Mammary epithelial cell (primary cell): ENCODE measurements at regions of chr20 and their contacts with region 1.

Region 1: GRCh38 chr20:31496761-31497295 is 17.4 kb upstream of the HM13 start:
- DNase-seq: no peak
- H3K4me3 ChIP-seq: no peak overlapping the region
- H3K27ac ChIP-seq: no peak overlapping the region
- H3K4me1 ChIP-seq: peaks cover 4% of the 10 kb centered on the region
- H3K27me3 ChIP-seq: no peaks in the 10 kb centered on the region
- CTCF ChIP-seq: no peak

Region 2: DNA sequence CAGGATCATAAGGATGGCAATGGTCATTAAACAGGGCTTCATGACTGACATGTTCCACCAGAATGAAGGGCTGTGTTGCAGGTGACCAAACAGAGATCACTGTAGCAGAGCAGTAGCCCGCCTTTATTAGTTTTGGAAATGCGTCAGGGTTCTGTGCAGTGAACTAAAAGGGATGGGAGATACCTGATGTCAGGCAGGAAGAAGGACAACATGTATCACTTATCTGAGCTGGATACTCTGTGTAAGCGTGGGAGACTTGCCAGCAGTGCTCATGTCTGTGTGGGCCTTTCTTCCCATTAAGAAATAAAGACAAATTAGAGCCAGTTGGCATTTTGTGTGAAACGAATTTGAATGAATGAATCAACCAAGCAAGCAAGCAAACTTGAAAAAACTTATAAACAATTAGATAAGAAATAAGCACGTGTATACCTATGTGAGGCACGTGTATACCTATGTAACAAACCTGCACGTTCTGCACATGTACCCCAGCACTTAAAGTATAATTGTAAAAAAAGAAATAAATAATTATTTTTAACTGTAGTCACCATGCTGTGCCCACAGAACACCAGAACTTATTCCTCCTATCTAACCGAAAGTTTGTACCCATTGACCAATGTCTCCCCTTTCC is 188.2 kb before region 1 on chr20 and contains the start of gene DEFB116:
- CTCF ChIA-PET with region 1: no interaction called
- dilution Hi-C with region 1: no loop called
- in situ Hi-C with region 1: no loop called
- intact Hi-C with region 1: loop called (anchors 2 kb)
- DNase-seq: no peak
- H3K4me3 ChIP-seq: no peak within 1 kb of the TSS
- H3K27ac ChIP-seq: no peak within 1 kb of the TSS
- H3K4me1 ChIP-seq: no peaks in the 10 kb centered on the region
- H3K27me3 ChIP-seq: no peaks in the 10 kb centered on the region
- CTCF ChIP-seq: no peak
- total RNA-seq, gene DEFB116: not detected

Region 3: DNA sequence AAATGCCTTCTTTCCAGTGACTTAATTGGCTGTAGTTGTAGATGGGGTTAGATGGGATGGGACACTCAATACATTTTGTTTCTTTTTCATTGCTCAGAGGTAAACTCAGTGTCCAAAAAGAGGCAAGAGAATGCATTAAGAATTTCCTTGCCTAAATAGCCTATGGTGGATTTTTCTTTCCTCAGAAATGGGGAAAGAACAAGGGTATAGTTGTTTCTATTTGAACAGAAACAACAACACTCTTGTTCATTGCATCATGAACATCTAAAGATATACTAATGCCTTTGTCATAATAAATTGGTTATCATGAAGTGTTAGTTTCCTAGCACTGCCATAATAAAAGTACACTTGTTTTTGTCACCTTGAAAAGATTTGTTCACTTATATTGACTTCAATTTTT is 71.0 kb before region 1 on chr20:
- CTCF ChIA-PET with region 1: no interaction called
- dilution Hi-C with region 1: loop called (anchors 5 kb)
- in situ Hi-C with region 1: no loop called
- intact Hi-C with region 1: no loop called
- DNase-seq: no peak
- H3K4me3 ChIP-seq: no peak overlapping the region
- H3K27ac ChIP-seq: no peak overlapping the region
- H3K4me1 ChIP-seq: no peaks in the 10 kb centered on the region
- H3K27me3 ChIP-seq: no peaks in the 10 kb centered on the region
- CTCF ChIP-seq: no peak

Region 4: DNA sequence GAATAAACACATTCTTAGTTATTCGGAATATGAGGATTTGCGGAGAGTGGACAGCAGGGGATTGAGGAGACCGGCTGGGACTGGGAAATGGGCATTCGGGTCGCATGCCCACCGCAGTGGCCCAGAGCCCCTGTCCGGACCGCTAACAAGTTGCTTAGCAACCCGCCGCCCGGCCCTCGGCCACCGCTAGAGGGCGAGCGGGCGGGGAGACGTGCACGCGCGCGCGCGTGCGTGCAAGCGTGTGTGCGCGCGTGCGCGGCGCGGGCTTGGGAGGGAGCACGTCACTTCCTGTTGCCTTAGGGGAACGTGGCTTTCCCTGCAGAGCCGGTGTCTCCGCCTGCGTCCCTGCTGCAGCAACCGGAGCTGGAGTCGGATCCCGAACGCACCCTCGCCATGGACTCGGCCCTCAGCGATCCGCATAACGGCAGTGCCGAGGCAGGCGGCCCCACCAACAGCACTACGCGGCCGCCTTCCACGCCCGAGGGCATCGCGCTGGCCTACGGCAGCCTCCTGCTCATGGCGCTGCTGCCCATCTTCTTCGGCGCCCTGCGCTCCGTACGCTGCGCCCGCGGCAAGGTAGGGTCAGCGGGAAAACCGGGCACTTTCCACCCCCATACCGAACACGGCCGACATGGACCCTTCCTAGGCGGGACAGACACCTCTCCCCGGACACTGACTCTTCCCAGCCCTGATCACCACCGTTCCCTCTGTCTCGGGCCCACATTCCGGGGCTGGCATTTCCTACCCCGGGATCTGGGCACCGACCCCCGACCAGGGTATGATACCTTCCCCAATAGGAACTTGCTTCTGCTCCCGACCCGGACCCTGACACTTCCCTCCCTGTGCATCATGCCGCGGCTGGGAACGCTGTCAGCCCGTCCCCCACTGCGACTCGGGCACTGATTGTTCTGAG is 17.6 kb after region 1 on chr20 and contains the start of gene HM13:
- CTCF ChIA-PET with region 1: no interaction called
- dilution Hi-C with region 1: no loop called
- in situ Hi-C with region 1: no loop called
- intact Hi-C with region 1: no loop called
- DNase-seq: peak; percentile 88
- H3K4me3 ChIP-seq: peak within 1 kb of the TSS; percentile 84 to 100 (median 99)
- H3K27ac ChIP-seq: peak within 1 kb of the TSS; percentile 77
- H3K4me1 ChIP-seq: peaks cover 17% of the 10 kb centered on the region
- H3K27me3 ChIP-seq: no peaks in the 10 kb centered on the region
- CTCF ChIP-seq: peak; percentile 86 to 91
- total RNA-seq, gene HM13: 65.2 to 184 TPM